CD8-positive, alpha-beta memory T cell (primary cell): ENCODE measurements at regions of chr17 and their contacts with region 1.

Region 1: GRCh38 chr17:30291543-30292285 is at the start of gene BLMH:
- DNase-seq: peak; percentile 68 to 86 (median 76)
- H3K4me3 ChIP-seq: peak within 1 kb of the TSS; percentile 96
- H3K4me3 Mint-ChIP-seq: peak within 1 kb of the TSS in 6 of 7 donors; percentile 91 to 95 (median 94)
- H3K27ac ChIP-seq: peak within 1 kb of the TSS; percentile 51
- H3K27ac Mint-ChIP-seq: peak within 1 kb of the TSS; percentile 68 to 94 (median 92)
- H3K4me1 ChIP-seq: peaks cover 19% of the 10 kb centered on the region
- H3K4me1 Mint-ChIP-seq: peaks cover 21 to 26% (median 21%) of the 10 kb centered on the region in 3 donors
- H3K27me3 ChIP-seq: no peaks in the 10 kb centered on the region
- H3K27me3 Mint-ChIP-seq: no peaks in the 10 kb centered on the region
- total RNA-seq, gene BLMH: 67.1 to 68.0 TPM

Region 2: GRCh38 chr17:30212750-30213149 is 79.0 kb before region 1 on chr17:
- CTCF ChIA-PET with region 1: no interaction called
- POLR2A ChIA-PET with region 1: no interaction called
- DNase-seq: no peak
- H3K4me3 ChIP-seq: no peak overlapping the region
- H3K4me3 Mint-ChIP-seq: no peak overlapping the region
- H3K27ac ChIP-seq: no peak overlapping the region
- H3K27ac Mint-ChIP-seq: no peak overlapping the region
- H3K4me1 ChIP-seq: no peaks in the 10 kb centered on the region
- H3K4me1 Mint-ChIP-seq: peaks cover 0 to 9% (median 1%) of the 10 kb centered on the region in 3 donors
- H3K27me3 ChIP-seq: no peaks in the 10 kb centered on the region
- H3K27me3 Mint-ChIP-seq: peaks cover 8 to 13% of the 10 kb centered on the region in 2 donors

Region 3: GRCh38 chr17:30323895-30324319 is 32.2 kb after region 1 on chr17:
- CTCF ChIA-PET with region 1: interaction called, 22 read pairs
- POLR2A ChIA-PET with region 1: interaction called, 15 read pairs
- DNase-seq: peak in 3 of 5 donors; percentile 7 to 55 (median 19)
- H3K4me3 ChIP-seq: peak overlapping the region; percentile 5
- H3K4me3 Mint-ChIP-seq: peak overlapping the region; percentile 48 to 80 (median 67)
- H3K27ac ChIP-seq: peak overlapping the region; percentile 15
- H3K27ac Mint-ChIP-seq: peak overlapping the region; percentile 44 to 93 (median 92)
- H3K4me1 ChIP-seq: peaks cover 25% of the 10 kb centered on the region
- H3K4me1 Mint-ChIP-seq: peaks cover 29 to 57% (median 56%) of the 10 kb centered on the region in 3 donors
- H3K27me3 ChIP-seq: no peaks in the 10 kb centered on the region
- H3K27me3 Mint-ChIP-seq: no peaks in the 10 kb centered on the region

Region 4: GRCh38 chr17:30519707-30520106 is 228.0 kb after region 1 on chr17:
- CTCF ChIA-PET with region 1: no interaction called
- POLR2A ChIA-PET with region 1: no interaction called
- DNase-seq: no peak
- H3K4me3 ChIP-seq: no peak overlapping the region
- H3K4me3 Mint-ChIP-seq: no peak overlapping the region
- H3K27ac ChIP-seq: no peak overlapping the region
- H3K27ac Mint-ChIP-seq: peak overlapping the region in 1 of 8 donors; percentile 48
- H3K4me1 ChIP-seq: no peaks in the 10 kb centered on the region
- H3K4me1 Mint-ChIP-seq: peaks cover 9 to 12% (median 10%) of the 10 kb centered on the region in 3 donors
- H3K27me3 ChIP-seq: no peaks in the 10 kb centered on the region
- H3K27me3 Mint-ChIP-seq: no peaks in the 10 kb centered on the region